ENCODE measurements at regions of chr12 and their contacts with region 1.

Region 1: GRCh38 chr12:49673446-49674317 is 33.5 kb downstream of the FMNL3 start:
- DNase-seq: no peak
- H3K4me3 ChIP-seq: peak overlapping the region; percentile 16; the same call in 1 of the 2 replicates
- CTCF ChIP-seq: peak; percentile 36

Region 2: GRCh38 chr12:49212572-49212971 is 461.1 kb before region 1 on chr12:
- CTCF ChIA-PET with region 1: no interaction called
- POLR2A ChIA-PET with region 1: no interaction called
- DNase-seq: no peak
- H3K4me3 ChIP-seq: no peak overlapping the region
- CTCF ChIP-seq: no peak

Region 3: GRCh38 chr12:49440035-49440434 is 233.6 kb before region 1 on chr12:
- CTCF ChIA-PET with region 1: no interaction called
- POLR2A ChIA-PET with region 1: no interaction called
- DNase-seq: no peak
- H3K4me3 ChIP-seq: no peak overlapping the region
- CTCF ChIP-seq: no peak

Region 4: DNA sequence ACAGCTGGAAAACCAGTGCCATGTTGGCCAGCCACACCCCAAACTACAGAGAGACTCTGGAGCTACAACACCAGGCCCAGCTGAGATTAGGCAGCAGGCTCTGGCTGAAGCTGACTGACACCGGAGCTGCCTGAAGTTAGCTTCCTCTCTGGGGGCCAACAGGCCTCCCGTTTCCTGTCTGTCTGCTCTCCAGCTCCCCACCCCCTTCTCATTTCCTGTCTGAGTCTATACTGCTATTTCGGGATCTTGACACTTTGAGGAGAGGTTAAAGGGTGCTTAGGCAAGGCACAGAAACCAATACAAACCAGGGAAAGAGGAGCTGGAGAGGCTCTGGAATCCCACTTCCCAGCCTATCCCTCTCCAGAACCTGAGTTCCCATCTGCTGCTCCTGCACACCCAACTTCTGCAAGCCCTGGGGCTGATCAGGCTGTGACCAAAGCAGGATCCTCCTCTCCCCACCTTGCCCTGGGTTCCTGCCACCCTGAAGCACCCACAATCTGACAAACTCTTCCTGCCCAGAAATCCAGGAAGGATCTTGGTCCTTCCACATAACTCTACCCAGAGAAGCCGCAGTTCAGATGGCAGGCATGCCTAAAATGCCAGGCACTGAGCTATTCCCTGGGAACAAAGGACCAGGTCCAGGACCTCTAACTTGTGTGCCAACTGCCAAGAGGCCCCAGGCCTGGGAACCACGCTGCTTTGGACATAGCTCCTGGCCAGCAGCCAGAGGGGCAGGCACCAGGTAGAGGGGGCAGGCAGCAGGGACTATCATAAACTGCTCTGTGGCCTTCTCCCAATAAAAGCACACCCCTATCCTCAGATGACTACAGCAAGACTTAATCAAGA is 10.5 kb before region 1 on chr12:
- CTCF ChIA-PET with region 1: interaction called, 11 read pairs
- POLR2A ChIA-PET with region 1: interaction called, 9 read pairs
- DNase-seq: no peak
- H3K4me3 ChIP-seq: no peak overlapping the region
- CTCF ChIP-seq: no peak

Measured in AG04449 (cell line).